ENCODE measurements at regions of chr3 and their contacts with region 1.

Region 1: DNA sequence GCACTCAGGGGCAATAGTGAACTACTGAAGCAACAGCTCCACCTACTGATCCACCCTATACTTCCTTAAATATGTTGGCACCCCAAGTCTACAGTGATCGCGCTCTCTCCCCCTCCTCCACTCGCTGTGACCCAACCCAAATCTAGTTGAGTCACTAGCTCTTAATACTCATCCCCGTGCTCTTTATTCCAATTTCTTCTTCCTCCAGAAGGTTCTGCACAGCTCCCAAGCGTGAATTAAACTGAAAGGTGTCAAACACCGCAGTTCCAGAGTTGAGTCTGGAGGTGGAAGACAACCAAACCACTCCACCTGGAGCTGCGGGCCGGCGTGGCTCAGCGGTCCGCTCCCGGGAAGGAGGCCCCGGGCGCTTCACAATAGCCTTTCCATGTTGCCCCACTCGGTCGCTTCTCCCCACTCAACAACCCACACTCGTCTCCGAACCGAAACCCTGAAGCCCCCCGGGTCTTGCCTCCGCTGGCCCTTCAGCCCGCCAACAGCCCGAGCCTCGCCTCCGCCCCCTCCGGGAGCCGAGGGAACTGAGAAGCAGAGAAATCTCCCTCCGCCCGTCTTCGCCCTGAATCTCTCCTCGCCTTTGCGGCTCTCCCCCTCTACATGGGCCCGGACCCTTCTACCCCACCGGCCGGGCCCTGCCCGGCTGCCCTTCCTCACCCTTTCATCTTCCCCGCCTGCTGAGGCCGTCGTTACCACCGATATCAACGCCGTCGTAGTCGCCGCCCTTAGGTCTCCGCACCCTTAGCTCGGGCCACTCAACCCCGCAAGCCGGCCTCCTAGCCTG is 578 bp downstream of the NAA50 start:
- DNase-seq: peak; percentile 89
- H3K4me3 Mint-ChIP-seq: peak overlapping the region; percentile 91
- H3K27ac Mint-ChIP-seq: peak overlapping the region; percentile 100
- H3K4me1 Mint-ChIP-seq: peaks cover 64% of the 10 kb centered on the region
- H3K27me3 Mint-ChIP-seq: no peaks in the 10 kb centered on the region

Region 2: GRCh38 chr3:112561731-112562688 is 1183.5 kb before region 1 on chr3 and contains the starts of genes ATG3 and SLC35A5:
- CTCF ChIA-PET with region 1: no interaction called
- POLR2A ChIA-PET with region 1: no interaction called
- intact Hi-C with region 1: loop called (anchors 1 kb)
- DNase-seq: peak; percentile 99
- H3K4me3 Mint-ChIP-seq: peak within 1 kb of the TSS; percentile 87
- H3K27ac Mint-ChIP-seq: peak within 1 kb of the TSS; percentile 98
- H3K4me1 Mint-ChIP-seq: peaks cover 31% of the 10 kb centered on the region
- H3K27me3 Mint-ChIP-seq: no peaks in the 10 kb centered on the region
- total RNA-seq, gene ATG3: 58.1 to 59.5 TPM
- total RNA-seq, gene SLC35A5: 15.5 to 17.8 TPM

Region 3: DNA sequence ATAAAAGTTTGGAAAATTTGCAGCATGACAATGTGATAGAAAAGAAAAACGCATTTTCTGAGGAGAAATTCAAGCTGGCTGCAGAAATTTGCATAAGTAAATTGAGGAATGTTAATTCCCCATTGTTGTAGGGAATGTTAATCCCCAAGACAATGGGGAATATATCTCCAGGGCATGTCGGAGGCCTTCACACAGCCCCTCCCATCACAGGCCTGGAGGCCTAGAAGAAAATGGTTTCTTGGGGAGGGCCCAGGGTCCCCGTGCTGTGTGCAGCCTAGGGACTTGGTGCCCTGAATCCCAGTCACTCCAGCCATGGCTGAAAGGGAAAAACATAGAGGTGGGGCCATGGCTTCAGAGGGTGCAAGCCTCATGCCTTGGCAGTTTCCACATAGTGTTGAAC is 433.1 kb before region 1 on chr3:
- CTCF ChIA-PET with region 1: no interaction called
- POLR2A ChIA-PET with region 1: no interaction called
- intact Hi-C with region 1: no loop called
- DNase-seq: no peak
- H3K4me3 Mint-ChIP-seq: no peak overlapping the region
- H3K27ac Mint-ChIP-seq: no peak overlapping the region
- H3K4me1 Mint-ChIP-seq: no peaks in the 10 kb centered on the region
- H3K27me3 Mint-ChIP-seq: no peaks in the 10 kb centered on the region

Region 4: DNA sequence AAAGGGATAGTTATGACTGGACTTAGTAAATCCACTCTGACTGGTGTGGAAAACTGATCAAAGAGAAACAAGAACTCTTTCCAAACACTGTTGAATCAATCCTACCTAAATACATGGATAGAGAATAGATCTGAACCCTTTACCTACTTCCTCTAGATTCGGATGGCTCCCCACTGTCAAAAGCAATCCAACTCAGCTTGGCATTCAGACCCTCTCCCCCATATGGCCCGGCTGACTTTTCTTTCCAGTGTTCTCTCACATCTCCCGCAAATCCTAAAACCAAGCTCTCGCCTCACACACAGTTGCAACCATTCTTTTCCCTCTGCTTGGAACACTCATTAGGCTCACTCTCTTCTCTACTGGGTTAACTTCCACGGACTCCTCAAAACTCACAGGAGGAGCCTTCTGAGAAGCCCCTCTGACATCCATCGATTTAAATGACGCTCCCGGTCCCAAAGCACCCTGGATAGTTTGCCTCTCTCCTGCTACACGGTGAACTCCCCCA is 231.2 kb before region 1 on chr3:
- CTCF ChIA-PET with region 1: interaction called, 3 read pairs
- POLR2A ChIA-PET with region 1: interaction called, 13 read pairs
- intact Hi-C with region 1: loop called (anchors 1 kb)
- DNase-seq: no peak
- H3K4me3 Mint-ChIP-seq: no peak overlapping the region
- H3K27ac Mint-ChIP-seq: no peak overlapping the region
- H3K4me1 Mint-ChIP-seq: peaks cover 13% of the 10 kb centered on the region
- H3K27me3 Mint-ChIP-seq: peaks cover 18% of the 10 kb centered on the region

Region 5: DNA sequence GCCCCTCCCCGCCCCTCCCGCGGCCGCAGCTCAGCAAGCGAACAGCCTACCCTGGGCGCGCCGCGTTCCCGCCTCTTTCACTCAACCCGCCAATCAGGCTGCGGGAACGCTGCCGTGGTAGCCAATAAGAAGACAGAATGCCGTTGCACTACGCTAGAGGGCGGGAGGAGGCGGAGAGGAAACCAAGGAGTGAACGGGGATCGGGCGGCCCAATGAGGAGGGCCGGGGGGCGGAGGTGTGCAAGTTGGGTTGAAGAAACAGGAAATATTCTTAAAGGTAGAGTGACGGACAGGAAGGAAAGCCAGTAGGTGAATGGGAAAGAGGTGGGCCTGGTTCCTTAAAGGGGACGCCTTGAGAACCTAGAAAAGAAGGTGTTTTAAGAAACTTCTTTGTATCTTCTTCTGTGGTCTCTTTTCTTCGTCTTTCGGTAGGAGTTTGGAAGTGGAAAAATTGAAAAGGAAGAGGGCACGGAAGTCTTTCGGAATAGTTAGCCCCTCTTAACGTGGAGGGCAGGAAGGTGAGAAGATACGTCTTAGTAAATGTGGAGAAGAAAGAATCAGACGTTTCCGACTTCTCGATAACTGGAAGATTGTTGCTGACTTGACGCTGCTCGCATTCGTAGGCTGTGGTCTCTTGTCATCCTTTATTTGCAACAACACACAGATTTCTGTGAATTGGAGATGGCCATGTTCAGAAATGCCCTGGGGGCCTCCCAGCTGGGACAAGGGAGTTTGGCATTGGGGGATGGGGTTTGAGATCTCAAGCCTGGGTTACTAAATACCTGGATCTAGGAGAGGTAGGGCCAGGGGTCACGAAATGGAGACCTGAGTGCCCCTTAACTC is 48.6 kb before region 1 on chr3:
- CTCF ChIA-PET with region 1: interaction called, 8 read pairs
- POLR2A ChIA-PET with region 1: interaction called, 12 read pairs
- intact Hi-C with region 1: loop called (anchors 1 kb)
- DNase-seq: peak; percentile 100
- H3K4me3 Mint-ChIP-seq: no peak overlapping the region
- H3K27ac Mint-ChIP-seq: no peak overlapping the region
- H3K4me1 Mint-ChIP-seq: peaks cover 20% of the 10 kb centered on the region
- H3K27me3 Mint-ChIP-seq: no peaks in the 10 kb centered on the region

Region 6: GRCh38 chr3:113844622-113845222 is 99.3 kb after region 1 on chr3:
- CTCF ChIA-PET with region 1: interaction called, 10 read pairs
- POLR2A ChIA-PET with region 1: no interaction called
- intact Hi-C with region 1: loop called (anchors 2 kb)
- DNase-seq: no peak
- H3K4me3 Mint-ChIP-seq: no peak overlapping the region
- H3K27ac Mint-ChIP-seq: no peak overlapping the region
- H3K4me1 Mint-ChIP-seq: no peaks in the 10 kb centered on the region
- H3K27me3 Mint-ChIP-seq: no peaks in the 10 kb centered on the region

Region 7: DNA sequence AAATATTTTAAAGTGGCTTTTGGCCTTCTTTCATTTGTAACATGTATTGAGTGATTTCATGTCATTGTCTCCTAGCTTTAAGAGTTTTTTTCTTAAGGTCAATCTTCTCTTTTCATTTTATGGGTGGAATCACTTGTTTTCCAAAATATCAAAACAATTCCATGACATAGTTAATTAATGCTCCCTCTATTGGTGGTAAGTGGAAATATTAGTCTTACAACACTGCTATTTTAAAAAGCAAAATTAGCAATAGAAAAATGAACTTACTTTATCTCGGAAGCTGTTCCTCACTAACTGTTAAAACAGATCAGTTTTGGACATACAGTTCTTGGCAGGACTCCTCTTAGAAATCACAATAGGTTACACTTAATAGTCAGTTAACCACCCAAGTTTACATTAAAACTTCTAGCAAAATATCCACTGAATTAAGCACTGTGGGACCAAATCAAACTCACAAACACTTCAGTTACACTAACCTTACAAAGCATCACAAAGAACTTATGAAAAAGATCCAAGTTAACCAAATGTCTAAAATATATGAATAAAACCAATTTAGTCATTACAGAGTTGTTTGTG is 590.7 kb after region 1 on chr3:
- CTCF ChIA-PET with region 1: no interaction called
- POLR2A ChIA-PET with region 1: no interaction called
- intact Hi-C with region 1: loop called (anchors 5 kb)
- DNase-seq: no peak
- H3K4me3 Mint-ChIP-seq: no peak overlapping the region
- H3K27ac Mint-ChIP-seq: peak overlapping the region; percentile 70
- H3K4me1 Mint-ChIP-seq: peaks cover 75% of the 10 kb centered on the region
- H3K27me3 Mint-ChIP-seq: no peaks in the 10 kb centered on the region